CD4-positive, alpha-beta memory T cell (primary cell): ENCODE measurements at regions of chr11 and their contacts with region 1.

Region 1: DNA sequence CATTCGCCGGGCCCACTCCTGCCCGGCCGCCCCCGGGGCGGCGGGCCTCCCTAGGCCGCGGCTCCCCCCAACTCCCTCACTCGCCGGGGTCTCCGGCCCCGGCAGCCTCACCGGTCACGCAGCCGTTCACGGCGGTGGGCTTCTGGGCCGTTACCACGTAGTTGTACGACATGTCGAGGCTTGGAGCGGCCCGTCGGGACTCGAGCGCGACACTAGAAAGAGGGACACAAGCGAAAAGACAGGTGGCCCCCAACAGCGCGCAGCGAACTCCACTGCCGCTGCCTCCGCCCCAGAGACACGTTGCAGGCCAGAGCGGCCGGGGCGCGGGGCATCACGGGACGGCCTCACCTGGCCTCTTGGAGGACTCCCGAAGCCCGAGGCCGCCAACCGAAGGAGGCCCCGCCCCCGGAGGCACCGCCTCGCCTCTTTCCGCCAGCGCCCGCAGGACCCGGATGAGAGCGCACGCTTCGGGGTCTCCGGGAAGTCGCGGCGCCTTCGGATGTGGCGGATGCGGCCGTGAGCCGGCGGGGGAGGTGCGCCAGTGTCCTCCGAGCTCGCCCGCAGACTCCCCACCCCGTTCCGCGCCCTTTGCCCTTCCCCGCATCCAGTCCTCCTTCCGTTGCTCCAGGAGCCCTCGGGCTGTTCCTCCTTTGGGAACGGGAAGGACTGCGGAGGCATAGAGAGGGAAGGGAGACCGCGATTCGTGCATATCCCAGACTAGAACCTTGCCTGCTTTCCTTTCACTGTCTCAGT is at the starts of genes DDB1 and TKFC:
- DNase-seq: peak; percentile 96 to 97 (median 97)
- H3K4me3 ChIP-seq: peak within 1 kb of the TSS; percentile 85 to 95
- H3K4me3 Mint-ChIP-seq: peak within 1 kb of the TSS; percentile 89 to 97 (median 96)
- H3K27ac ChIP-seq: peak within 1 kb of the TSS; percentile 83
- H3K27ac Mint-ChIP-seq: peak within 1 kb of the TSS; percentile 92 to 99 (median 98)
- H3K4me1 ChIP-seq: peaks cover 39% of the 10 kb centered on the region
- H3K4me1 Mint-ChIP-seq: peaks cover 36 to 71% (median 54%) of the 10 kb centered on the region in 4 donors
- H3K27me3 ChIP-seq: no peaks in the 10 kb centered on the region
- H3K27me3 Mint-ChIP-seq: no peaks in the 10 kb centered on the region
- total RNA-seq, gene DDB1: 156 to 169 TPM
- total RNA-seq, gene TKFC: 42.1 to 43.9 TPM

Region 2: DNA sequence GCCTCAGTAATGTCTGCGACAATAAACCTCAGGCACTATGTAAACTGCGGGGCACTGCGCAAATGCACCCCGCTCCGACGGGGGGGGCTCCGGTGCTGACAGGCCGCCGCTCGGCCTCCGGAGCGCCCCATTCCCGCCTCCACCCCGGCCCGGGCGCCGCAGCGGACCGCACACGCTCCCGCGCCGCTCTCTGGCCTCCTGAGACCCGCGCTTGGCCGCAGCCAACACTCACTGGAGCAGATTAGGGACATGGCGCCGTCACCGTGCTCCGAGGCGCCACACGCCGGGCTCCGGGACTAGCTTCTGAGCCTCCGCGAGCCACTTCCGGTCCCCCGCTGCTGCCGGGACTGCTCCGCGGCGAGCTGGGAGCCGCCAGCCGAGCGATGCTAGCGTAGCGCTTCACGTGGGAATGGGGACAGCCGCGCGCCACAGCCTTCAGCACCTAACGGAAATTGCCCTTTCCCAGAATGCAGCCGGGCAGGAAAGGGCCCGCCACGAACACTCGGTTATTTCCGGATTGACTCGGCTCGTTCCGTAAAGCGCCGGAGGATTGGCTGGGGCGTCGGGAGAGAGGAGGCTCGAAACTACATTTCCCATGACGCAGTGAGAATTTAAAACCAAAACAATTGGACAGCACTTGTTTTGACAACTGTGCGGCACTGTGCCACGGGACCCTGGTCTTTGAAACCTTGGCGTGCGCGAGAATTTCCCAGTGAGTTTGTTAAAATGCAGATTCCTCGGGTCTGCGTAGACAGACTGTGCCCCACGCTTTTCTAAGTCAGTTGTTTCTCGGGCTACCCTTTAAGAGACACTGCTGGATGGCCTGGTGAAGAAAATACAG is 426.6 kb before region 1 on chr11 and contains the start of gene PRPF19:
- CTCF ChIA-PET with region 1: no interaction called
- POLR2A ChIA-PET with region 1: no interaction called
- intact Hi-C with region 1: loop called (anchors 2 kb)
- DNase-seq: peak; percentile 99 to 100 (median 99)
- H3K4me3 ChIP-seq: peak within 1 kb of the TSS; percentile 85
- H3K4me3 Mint-ChIP-seq: peak within 1 kb of the TSS; percentile 82 to 94 (median 91)
- H3K27ac ChIP-seq: peak within 1 kb of the TSS; percentile 85
- H3K27ac Mint-ChIP-seq: peak within 1 kb of the TSS; percentile 94 to 99 (median 99)
- H3K4me1 ChIP-seq: peaks cover 38% of the 10 kb centered on the region
- H3K4me1 Mint-ChIP-seq: peaks cover 19 to 60% (median 38%) of the 10 kb centered on the region in 4 donors
- H3K27me3 ChIP-seq: no peaks in the 10 kb centered on the region
- H3K27me3 Mint-ChIP-seq: no peaks in the 10 kb centered on the region
- total RNA-seq, gene PRPF19: 97.4 to 99.2 TPM

Region 3: DNA sequence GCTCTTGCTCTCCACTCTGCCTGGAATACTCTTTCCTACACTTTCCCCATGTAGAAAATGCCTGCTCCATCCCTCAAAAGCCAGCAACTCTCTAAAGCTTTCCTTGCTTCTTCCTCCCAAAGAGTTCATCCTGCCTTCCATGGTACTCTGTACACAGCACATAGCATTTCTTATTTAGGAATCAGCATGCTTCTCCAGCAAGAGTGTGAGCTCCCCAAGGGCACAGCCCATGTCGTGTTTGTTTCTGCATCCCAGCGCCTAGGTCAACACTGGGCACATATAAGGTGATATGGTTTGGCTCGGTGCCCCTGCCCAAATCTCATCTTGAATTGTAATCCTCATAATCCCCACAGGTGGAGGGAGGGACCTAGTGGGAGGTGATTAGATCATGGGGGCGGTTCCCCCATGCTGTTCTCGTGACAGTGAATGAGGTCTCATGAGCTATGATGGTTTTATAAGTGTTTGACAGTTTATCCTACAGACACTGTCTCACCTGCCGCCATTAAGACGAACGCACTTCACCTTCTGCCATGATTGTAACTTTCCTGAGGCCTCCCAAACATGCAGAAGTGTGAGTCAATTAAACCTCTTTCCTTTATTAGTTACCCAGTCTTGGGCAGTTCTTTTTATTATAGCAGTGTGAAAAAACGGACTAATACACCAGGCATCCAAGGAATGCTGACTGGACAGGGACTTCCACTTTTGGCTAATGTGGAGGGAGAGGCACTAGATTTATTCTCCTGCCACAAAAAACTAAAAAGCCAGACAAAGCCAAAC is 180.0 kb before region 1 on chr11:
- CTCF ChIA-PET with region 1: no interaction called
- POLR2A ChIA-PET with region 1: no interaction called
- intact Hi-C with region 1: no loop called
- DNase-seq: no peak
- H3K4me3 ChIP-seq: no peak overlapping the region
- H3K4me3 Mint-ChIP-seq: peak overlapping the region in 1 of 8 donors; percentile 22
- H3K27ac ChIP-seq: no peak overlapping the region
- H3K27ac Mint-ChIP-seq: no peak overlapping the region
- H3K4me1 ChIP-seq: no peaks in the 10 kb centered on the region
- H3K4me1 Mint-ChIP-seq: peaks cover 4 to 12% (median 5%) of the 10 kb centered on the region in 4 donors
- H3K27me3 ChIP-seq: no peaks in the 10 kb centered on the region
- H3K27me3 Mint-ChIP-seq: no peaks in the 10 kb centered on the region

Region 4: GRCh38 chr11:61353131-61354067 is 20.4 kb after region 1 on chr11:
- CTCF ChIA-PET with region 1: interaction called, 22 read pairs
- POLR2A ChIA-PET with region 1: interaction called, 4 read pairs
- intact Hi-C with region 1: no loop called
- DNase-seq: no peak
- H3K4me3 ChIP-seq: no peak overlapping the region
- H3K4me3 Mint-ChIP-seq: peak overlapping the region in 1 of 8 donors; percentile 7
- H3K27ac ChIP-seq: no peak overlapping the region
- H3K27ac Mint-ChIP-seq: no peak overlapping the region
- H3K4me1 ChIP-seq: no peaks in the 10 kb centered on the region
- H3K4me1 Mint-ChIP-seq: peaks cover 5 to 8% (median 6%) of the 10 kb centered on the region in 4 donors
- H3K27me3 ChIP-seq: no peaks in the 10 kb centered on the region
- H3K27me3 Mint-ChIP-seq: no peaks in the 10 kb centered on the region

Region 5: DNA sequence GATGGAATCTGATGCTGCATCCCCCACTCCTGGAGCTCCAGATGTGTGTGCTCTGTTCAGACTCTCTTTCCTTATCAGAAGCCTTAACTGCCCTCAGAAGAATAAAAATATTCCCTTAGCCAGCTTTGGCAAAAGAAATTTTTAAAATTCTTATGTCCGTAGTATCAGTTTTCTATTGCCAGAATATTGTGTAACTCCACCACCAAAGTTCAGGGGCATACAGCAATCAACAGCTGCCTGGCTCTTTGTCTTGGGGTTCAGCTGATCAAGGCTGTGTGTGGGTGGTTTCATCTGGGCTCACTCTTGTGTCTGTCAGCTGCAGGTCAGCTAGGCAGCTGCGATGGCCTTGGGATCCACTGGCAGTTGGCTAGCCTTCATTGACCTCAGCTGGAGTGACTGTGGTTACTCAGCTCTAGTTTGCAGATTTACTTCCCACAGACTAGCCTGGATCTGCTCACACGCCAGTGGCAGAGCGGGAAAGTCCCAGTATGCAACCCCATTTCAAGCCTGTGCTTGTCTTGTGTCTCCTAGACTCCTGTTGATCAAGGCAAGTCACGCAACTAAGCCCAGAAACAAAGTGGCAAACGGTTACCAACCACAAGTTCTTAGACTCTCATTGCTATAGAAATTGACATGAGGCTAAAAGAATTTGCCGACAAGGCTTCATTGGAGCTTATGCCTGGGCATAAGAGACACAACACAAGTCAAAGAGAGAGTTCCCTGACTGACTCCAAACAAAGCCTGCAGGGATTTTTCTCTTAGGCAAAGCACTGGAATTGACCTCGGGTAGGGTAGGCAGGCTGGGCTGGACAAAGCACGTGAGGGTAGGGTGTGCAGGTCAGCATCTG is 36.6 kb after region 1 on chr11:
- CTCF ChIA-PET with region 1: interaction called, 92 read pairs
- POLR2A ChIA-PET with region 1: interaction called, 97 read pairs
- intact Hi-C with region 1: no loop called
- DNase-seq: no peak
- H3K4me3 ChIP-seq: no peak overlapping the region
- H3K4me3 Mint-ChIP-seq: no peak overlapping the region
- H3K27ac ChIP-seq: no peak overlapping the region
- H3K27ac Mint-ChIP-seq: peak overlapping the region in 2 of 7 donors; percentile 0 to 7
- H3K4me1 ChIP-seq: no peaks in the 10 kb centered on the region
- H3K4me1 Mint-ChIP-seq: no peaks in the 10 kb centered on the region
- H3K27me3 ChIP-seq: no peaks in the 10 kb centered on the region
- H3K27me3 Mint-ChIP-seq: no peaks in the 10 kb centered on the region

Region 6: DNA sequence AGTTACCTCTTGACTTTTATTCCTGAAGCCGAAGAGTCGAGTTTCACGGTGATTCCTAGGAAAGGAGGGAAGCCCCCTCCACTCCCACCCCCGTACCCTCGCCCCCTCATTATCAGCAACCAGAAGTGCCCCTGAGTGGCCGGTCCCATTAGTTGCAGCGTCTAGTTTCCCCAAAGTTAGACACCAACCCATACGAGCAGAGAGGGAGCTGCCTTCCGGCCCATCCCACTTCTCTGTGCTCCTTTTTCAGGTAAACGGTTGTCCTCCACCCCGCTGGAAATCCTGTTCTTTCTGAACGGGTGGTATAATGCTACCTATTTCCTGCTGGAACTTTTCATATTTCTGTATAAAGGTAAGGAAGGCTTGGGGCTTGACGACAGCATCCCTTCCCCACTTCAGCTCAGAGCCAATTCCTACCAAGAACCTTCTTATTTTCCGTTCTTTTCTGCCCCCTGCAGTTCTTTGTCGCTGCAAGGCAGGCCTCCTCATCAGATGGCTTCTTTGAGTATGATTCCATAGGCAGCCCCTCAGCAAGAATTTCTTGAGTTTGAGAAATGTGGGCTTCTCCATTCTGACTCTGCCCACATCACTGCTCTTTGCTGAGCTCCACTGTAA is 60.1 kb after region 1 on chr11:
- CTCF ChIA-PET with region 1: interaction called, 442 read pairs
- POLR2A ChIA-PET with region 1: interaction called, 89 read pairs
- intact Hi-C with region 1: loop called (anchors 2 kb)
- DNase-seq: peak; percentile 24 to 46 (median 27)
- H3K4me3 ChIP-seq: peak overlapping the region; percentile 77 to 86
- H3K4me3 Mint-ChIP-seq: peak overlapping the region; percentile 91 to 97 (median 96)
- H3K27ac ChIP-seq: peak overlapping the region; percentile 74
- H3K27ac Mint-ChIP-seq: peak overlapping the region; percentile 95 to 99 (median 98)
- H3K4me1 ChIP-seq: peaks cover 26% of the 10 kb centered on the region
- H3K4me1 Mint-ChIP-seq: peaks cover 12 to 27% (median 22%) of the 10 kb centered on the region in 4 donors
- H3K27me3 ChIP-seq: no peaks in the 10 kb centered on the region
- H3K27me3 Mint-ChIP-seq: no peaks in the 10 kb centered on the region

Region 7: DNA sequence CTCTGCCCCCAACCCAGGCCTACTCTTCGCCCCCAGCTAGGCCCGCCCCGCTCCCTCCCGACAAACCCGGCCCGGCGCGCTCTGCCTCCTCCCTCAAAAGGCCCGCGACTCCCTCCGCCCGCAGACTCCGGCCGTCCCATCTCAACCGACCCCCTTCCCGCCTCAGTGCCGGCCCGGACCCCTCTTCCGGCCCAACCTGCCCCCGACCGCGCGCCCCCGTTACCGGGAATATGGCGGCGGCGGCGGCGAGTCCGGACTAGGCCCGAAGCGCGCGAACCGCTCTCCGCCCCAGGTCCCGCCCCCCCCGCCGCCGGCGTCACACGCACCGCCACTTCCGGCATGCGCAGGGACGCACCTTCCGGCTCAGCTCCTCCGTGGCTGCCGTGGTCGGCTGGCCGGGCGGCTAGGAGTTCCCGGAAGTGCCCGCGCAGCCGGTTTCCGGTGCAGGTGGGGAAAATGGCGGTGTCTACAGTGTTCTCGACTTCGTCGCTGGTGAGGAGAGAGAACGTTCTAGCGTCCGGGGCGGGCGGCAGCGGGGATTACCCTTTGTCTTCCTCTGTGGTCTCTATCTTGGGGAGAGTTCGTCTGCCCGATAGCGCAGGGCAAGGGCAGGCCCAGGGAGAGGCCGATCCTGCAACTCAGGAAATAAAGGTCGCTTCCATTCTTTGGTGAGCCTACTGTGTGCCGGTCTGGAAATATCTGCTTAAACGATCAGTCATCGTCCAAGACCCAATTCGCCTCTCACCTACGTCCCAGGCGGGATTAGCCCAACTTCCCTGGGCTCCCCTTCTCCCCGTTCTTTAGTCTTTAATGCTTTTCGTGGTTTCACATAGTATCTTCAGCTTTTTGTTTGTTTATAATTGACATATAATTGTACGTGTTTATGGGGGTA is 97.0 kb after region 1 on chr11 and contains the starts of genes CPSF7 and SDHAF2:
- CTCF ChIA-PET with region 1: interaction called, 43 read pairs
- POLR2A ChIA-PET with region 1: interaction called, 21 read pairs
- intact Hi-C with region 1: loop called (anchors 1 kb)
- DNase-seq: peak; percentile 96 to 98 (median 97)
- H3K4me3 ChIP-seq: peak within 1 kb of the TSS; percentile 89 to 94
- H3K4me3 Mint-ChIP-seq: peak within 1 kb of the TSS; percentile 94 to 99 (median 98)
- H3K27ac ChIP-seq: peak within 1 kb of the TSS; percentile 99
- H3K27ac Mint-ChIP-seq: peak within 1 kb of the TSS; percentile 99 to 100 (median 100)
- H3K4me1 ChIP-seq: peaks cover 75% of the 10 kb centered on the region
- H3K4me1 Mint-ChIP-seq: peaks cover 29 to 82% (median 61%) of the 10 kb centered on the region in 4 donors
- H3K27me3 ChIP-seq: no peaks in the 10 kb centered on the region
- H3K27me3 Mint-ChIP-seq: no peaks in the 10 kb centered on the region
- total RNA-seq, gene CPSF7: 145 to 149 TPM
- total RNA-seq, gene SDHAF2: 54.7 to 60.2 TPM

Region 8: GRCh38 chr11:61516675-61517572 is 184.0 kb after region 1 on chr11:
- CTCF ChIA-PET with region 1: interaction called, 12 read pairs
- POLR2A ChIA-PET with region 1: no interaction called
- intact Hi-C with region 1: loop called (anchors 2 kb)
- DNase-seq: peak in 4 of 5 donors; percentile 37 to 48 (median 41)
- H3K4me3 ChIP-seq: no peak overlapping the region
- H3K4me3 Mint-ChIP-seq: peak overlapping the region in 5 of 8 donors; percentile 12 to 77 (median 57)
- H3K27ac ChIP-seq: no peak overlapping the region
- H3K27ac Mint-ChIP-seq: peak overlapping the region in 1 of 7 donors; percentile 46
- H3K4me1 ChIP-seq: peaks cover 11% of the 10 kb centered on the region
- H3K4me1 Mint-ChIP-seq: peaks cover 2 to 8% (median 7%) of the 10 kb centered on the region in 4 donors
- H3K27me3 ChIP-seq: no peaks in the 10 kb centered on the region
- H3K27me3 Mint-ChIP-seq: peaks cover 4 to 23% of the 10 kb centered on the region in 2 donors

Region 9: GRCh38 chr11:61742393-61742792 is 409.4 kb after region 1 on chr11:
- CTCF ChIA-PET with region 1: no interaction called
- POLR2A ChIA-PET with region 1: no interaction called
- intact Hi-C with region 1: no loop called
- DNase-seq: no peak
- H3K4me3 ChIP-seq: no peak overlapping the region
- H3K4me3 Mint-ChIP-seq: no peak overlapping the region
- H3K27ac ChIP-seq: no peak overlapping the region
- H3K27ac Mint-ChIP-seq: no peak overlapping the region
- H3K4me1 ChIP-seq: no peaks in the 10 kb centered on the region
- H3K4me1 Mint-ChIP-seq: no peaks in the 10 kb centered on the region
- H3K27me3 ChIP-seq: no peaks in the 10 kb centered on the region
- H3K27me3 Mint-ChIP-seq: no peaks in the 10 kb centered on the region